ENCODE measurements at regions of chr12 and their contacts with region 1.

Region 1: GRCh38 chr12:114166362-114166761 is 200.2 kb upstream of the RBM19 start:
- DNase-seq: peak; percentile 53
- H3K4me3 ChIP-seq: no peak overlapping the region
- H3K27ac ChIP-seq: no peak overlapping the region
- H3K4me1 ChIP-seq: no peaks in the 10 kb centered on the region
- H3K27me3 ChIP-seq: peaks cover 5% of the 10 kb centered on the region
- CTCF ChIP-seq: peak; percentile 65

Region 2: GRCh38 chr12:113955109-113955970 is 211.0 kb before region 1 on chr12:
- CTCF ChIA-PET with region 1: no interaction called
- POLR2A ChIA-PET with region 1: no interaction called
- intact Hi-C with region 1: no loop called
- DNase-seq: peak; percentile 8
- H3K4me3 ChIP-seq: no peak overlapping the region
- H3K27ac ChIP-seq: no peak overlapping the region
- H3K4me1 ChIP-seq: no peaks in the 10 kb centered on the region
- H3K27me3 ChIP-seq: no peaks in the 10 kb centered on the region
- CTCF ChIP-seq: peak; percentile 33

Region 3: DNA sequence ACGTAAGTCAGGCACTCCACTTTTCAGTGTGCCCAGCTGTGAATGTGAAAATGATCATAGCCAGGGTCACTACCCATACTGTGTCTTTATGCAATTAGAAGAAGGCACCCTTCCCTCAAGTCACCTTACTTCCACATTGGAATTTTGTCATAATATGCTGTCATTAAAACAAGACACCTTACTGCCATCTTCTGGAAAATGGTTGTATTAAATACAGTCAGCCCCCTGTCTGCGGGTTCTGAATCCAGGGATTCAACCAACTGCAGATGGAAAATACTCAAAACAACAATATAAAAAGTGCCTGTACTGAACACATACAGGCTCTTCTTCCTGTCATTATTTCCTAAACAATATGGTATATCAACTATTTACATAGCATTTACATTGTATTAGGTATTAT is 309.8 kb after region 1 on chr12:
- CTCF ChIA-PET with region 1: no interaction called
- POLR2A ChIA-PET with region 1: no interaction called
- intact Hi-C with region 1: loop called (anchors 2 kb)
- DNase-seq: peak; percentile 41
- H3K4me3 ChIP-seq: no peak overlapping the region
- H3K27ac ChIP-seq: no peak overlapping the region
- H3K4me1 ChIP-seq: no peaks in the 10 kb centered on the region
- H3K27me3 ChIP-seq: peaks cover 44% of the 10 kb centered on the region
- CTCF ChIP-seq: peak; percentile 50

Region 4: GRCh38 chr12:114508529-114509129 is 342.3 kb after region 1 on chr12:
- CTCF ChIA-PET with region 1: interaction called, 6 read pairs
- POLR2A ChIA-PET with region 1: no interaction called
- intact Hi-C with region 1: loop called (anchors 1 kb)
- DNase-seq: peak; percentile 70
- H3K4me3 ChIP-seq: no peak overlapping the region
- H3K27ac ChIP-seq: no peak overlapping the region
- H3K4me1 ChIP-seq: no peaks in the 10 kb centered on the region
- H3K27me3 ChIP-seq: peaks cover 6% of the 10 kb centered on the region
- CTCF ChIP-seq: peak; percentile 76